ENCODE measurements at regions of chr2 and their contacts with region 1.

Region 1: GRCh38 chr2:231463698-231464575 is at the start of gene NCL:
- DNase-seq: peak; percentile 75 to 96 (median 91)
- ATAC-seq: peak; percentile 73
- H3K4me3 ChIP-seq: peak within 1 kb of the TSS; percentile 65
- H3K4me3 Mint-ChIP-seq: peak within 1 kb of the TSS; percentile 90 to 99 (median 95)
- H3K27ac ChIP-seq: peak within 1 kb of the TSS; percentile 96
- H3K27ac Mint-ChIP-seq: peak within 1 kb of the TSS; percentile 96 to 100 (median 100)
- H3K4me1 ChIP-seq: peaks cover 26 to 28% of the 10 kb centered on the region in 2 donors
- H3K4me1 Mint-ChIP-seq: peaks cover 39 to 65% (median 44%) of the 10 kb centered on the region in 7 donors
- H3K27me3 ChIP-seq: no peaks in the 10 kb centered on the region
- H3K27me3 Mint-ChIP-seq: no peaks in the 10 kb centered on the region
- total RNA-seq, gene NCL: 411 to 647 (median 426) TPM

Region 2: GRCh38 chr2:231452799-231453508 is 11.0 kb before region 1 on chr2:
- CTCF ChIA-PET with region 1: interaction called, 18 read pairs
- POLR2A ChIA-PET with region 1: interaction called, 66 read pairs
- intact Hi-C with region 1: loop called (anchors 1 kb)
- DNase-seq: peak in 1 of 9 donors; percentile 20
- ATAC-seq: peak; percentile 16
- H3K4me3 ChIP-seq: no peak overlapping the region
- H3K4me3 Mint-ChIP-seq: peak overlapping the region in 2 of 10 donors; percentile 37 to 53
- H3K27ac ChIP-seq: no peak overlapping the region
- H3K27ac Mint-ChIP-seq: peak overlapping the region in 7 of 9 donors; percentile 31 to 84 (median 62)
- H3K4me1 ChIP-seq: no peaks in the 10 kb centered on the region
- H3K4me1 Mint-ChIP-seq: peaks cover 10 to 21% (median 12%) of the 10 kb centered on the region in 7 donors
- H3K27me3 ChIP-seq: no peaks in the 10 kb centered on the region
- H3K27me3 Mint-ChIP-seq: no peaks in the 10 kb centered on the region

Region 3: GRCh38 chr2:231475965-231476364 is 12.0 kb after region 1 on chr2:
- CTCF ChIA-PET with region 1: interaction called, 5 read pairs
- POLR2A ChIA-PET with region 1: interaction called, 130 read pairs
- intact Hi-C with region 1: no loop called
- DNase-seq: no peak
- ATAC-seq: no peak
- H3K4me3 ChIP-seq: no peak overlapping the region
- H3K4me3 Mint-ChIP-seq: no peak overlapping the region
- H3K27ac ChIP-seq: no peak overlapping the region
- H3K27ac Mint-ChIP-seq: no peak overlapping the region
- H3K4me1 ChIP-seq: no peaks in the 10 kb centered on the region
- H3K4me1 Mint-ChIP-seq: peaks cover 0 to 2% (median 0%) of the 10 kb centered on the region in 7 donors
- H3K27me3 ChIP-seq: no peaks in the 10 kb centered on the region
- H3K27me3 Mint-ChIP-seq: peaks cover 0 to 2% (median 0%) of the 10 kb centered on the region in 5 donors

Region 4: GRCh38 chr2:231482806-231483391 is 19.0 kb after region 1 on chr2:
- CTCF ChIA-PET with region 1: interaction called, 20 read pairs
- POLR2A ChIA-PET with region 1: interaction called, 130 read pairs
- intact Hi-C with region 1: loop called (anchors 1 kb)
- DNase-seq: peak; percentile 52 to 82 (median 70)
- ATAC-seq: peak; percentile 86
- H3K4me3 ChIP-seq: peak overlapping the region; percentile 73
- H3K4me3 Mint-ChIP-seq: peak overlapping the region; percentile 62 to 87 (median 82)
- H3K27ac ChIP-seq: peak overlapping the region; percentile 83
- H3K27ac Mint-ChIP-seq: peak overlapping the region; percentile 81 to 96 (median 89)
- H3K4me1 ChIP-seq: peaks cover 0 to 4% of the 10 kb centered on the region in 2 donors
- H3K4me1 Mint-ChIP-seq: peaks cover 0 to 18% (median 11%) of the 10 kb centered on the region in 7 donors
- H3K27me3 ChIP-seq: no peaks in the 10 kb centered on the region
- H3K27me3 Mint-ChIP-seq: no peaks in the 10 kb centered on the region

Region 5: GRCh38 chr2:231514103-231514950 is 50.4 kb after region 1 on chr2:
- CTCF ChIA-PET with region 1: interaction called, 5 read pairs
- POLR2A ChIA-PET with region 1: interaction called, 51 read pairs
- intact Hi-C with region 1: loop called (anchors 1 kb)
- DNase-seq: peak; percentile 92 to 99 (median 98)
- ATAC-seq: peak; percentile 99
- H3K4me3 ChIP-seq: peak overlapping the region; percentile 84
- H3K4me3 Mint-ChIP-seq: peak overlapping the region; percentile 80 to 95 (median 92)
- H3K27ac ChIP-seq: peak overlapping the region; percentile 93
- H3K27ac Mint-ChIP-seq: peak overlapping the region; percentile 93 to 99 (median 98)
- H3K4me1 ChIP-seq: peaks cover 5 to 11% of the 10 kb centered on the region in 2 donors
- H3K4me1 Mint-ChIP-seq: peaks cover 0 to 21% (median 14%) of the 10 kb centered on the region in 7 donors
- H3K27me3 ChIP-seq: no peaks in the 10 kb centered on the region
- H3K27me3 Mint-ChIP-seq: peaks cover 0 to 4% (median 0%) of the 10 kb centered on the region in 5 donors

Region 6: GRCh38 chr2:231557571-231558237 is 93.8 kb after region 1 on chr2:
- CTCF ChIA-PET with region 1: no interaction called
- POLR2A ChIA-PET with region 1: interaction called, 5 read pairs
- intact Hi-C with region 1: loop called in 1 of 2 experiments (anchors 5 kb)
- DNase-seq: peak; percentile 29 to 79 (median 76)
- ATAC-seq: peak; percentile 93
- H3K4me3 ChIP-seq: no peak overlapping the region
- H3K4me3 Mint-ChIP-seq: no peak overlapping the region
- H3K27ac ChIP-seq: no peak overlapping the region
- H3K27ac Mint-ChIP-seq: no peak overlapping the region
- H3K4me1 ChIP-seq: peaks cover 0 to 5% of the 10 kb centered on the region in 2 donors
- H3K4me1 Mint-ChIP-seq: peaks cover 0 to 33% (median 9%) of the 10 kb centered on the region in 7 donors
- H3K27me3 ChIP-seq: no peaks in the 10 kb centered on the region
- H3K27me3 Mint-ChIP-seq: peaks cover 0 to 3% (median 0%) of the 10 kb centered on the region in 5 donors

Region 7: GRCh38 chr2:231780909-231781797 is 317.2 kb after region 1 on chr2 and contains the start of gene PDE6D:
- CTCF ChIA-PET with region 1: no interaction called
- POLR2A ChIA-PET with region 1: interaction called, 7 read pairs
- intact Hi-C with region 1: loop called (anchors 1 kb)
- DNase-seq: peak; percentile 90 to 98 (median 94)
- ATAC-seq: peak; percentile 94
- H3K4me3 ChIP-seq: peak within 1 kb of the TSS; percentile 100
- H3K4me3 Mint-ChIP-seq: peak within 1 kb of the TSS; percentile 85 to 99 (median 98)
- H3K27ac ChIP-seq: peak within 1 kb of the TSS; percentile 82
- H3K27ac Mint-ChIP-seq: peak within 1 kb of the TSS; percentile 90 to 98 (median 94)
- H3K4me1 ChIP-seq: peaks cover 26 to 30% of the 10 kb centered on the region in 2 donors
- H3K4me1 Mint-ChIP-seq: peaks cover 45 to 76% (median 57%) of the 10 kb centered on the region in 7 donors
- H3K27me3 ChIP-seq: no peaks in the 10 kb centered on the region
- H3K27me3 Mint-ChIP-seq: peaks cover 0 to 5% (median 0%) of the 10 kb centered on the region in 5 donors
- total RNA-seq, gene PDE6D: 14.3 to 35.7 (median 25.2) TPM